Head of caudate nucleus (tissue), 42 donors: ENCODE measurements at regions of chr17 and their contacts with region 1.

Region 1: DNA sequence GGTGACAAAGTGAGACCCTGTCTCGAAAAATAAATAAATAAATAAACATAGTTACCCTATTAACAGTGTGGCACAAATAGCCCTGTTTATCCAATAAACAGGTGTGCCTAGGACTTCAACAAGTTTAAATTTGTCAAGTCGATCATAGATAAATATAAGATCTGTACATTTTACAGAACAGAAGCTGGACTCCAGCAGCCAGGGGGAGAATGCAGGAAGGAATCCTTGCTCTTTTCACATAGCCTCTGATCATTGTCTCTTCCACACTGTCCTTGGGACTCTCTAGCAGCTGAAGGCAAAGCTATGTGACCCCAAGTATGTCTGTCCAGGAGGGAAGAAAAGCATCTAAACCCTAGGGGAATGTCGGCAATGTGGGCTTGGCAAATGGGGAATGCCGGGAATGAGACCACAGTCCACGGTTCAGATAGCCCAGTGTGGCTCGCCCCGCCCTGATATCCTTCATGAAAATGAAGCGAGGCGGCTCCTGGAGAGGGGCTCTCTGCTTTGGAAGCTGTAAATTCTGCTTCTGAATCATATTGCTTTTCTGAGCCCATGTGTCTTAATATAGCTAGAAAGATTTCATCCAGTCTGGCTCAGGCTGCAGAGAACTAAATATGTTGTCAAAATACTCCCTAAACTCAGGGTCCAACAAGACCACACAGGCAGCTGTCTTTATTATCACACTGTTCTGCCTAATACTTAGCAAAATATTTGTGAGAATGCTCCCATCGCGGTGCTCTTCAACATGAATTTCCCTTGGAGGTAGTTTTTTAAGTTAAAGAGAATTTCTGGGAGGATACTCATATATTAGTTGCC is 24.9 kb upstream of the GRB2 start:
- DNase-seq: no peak

Region 2: DNA sequence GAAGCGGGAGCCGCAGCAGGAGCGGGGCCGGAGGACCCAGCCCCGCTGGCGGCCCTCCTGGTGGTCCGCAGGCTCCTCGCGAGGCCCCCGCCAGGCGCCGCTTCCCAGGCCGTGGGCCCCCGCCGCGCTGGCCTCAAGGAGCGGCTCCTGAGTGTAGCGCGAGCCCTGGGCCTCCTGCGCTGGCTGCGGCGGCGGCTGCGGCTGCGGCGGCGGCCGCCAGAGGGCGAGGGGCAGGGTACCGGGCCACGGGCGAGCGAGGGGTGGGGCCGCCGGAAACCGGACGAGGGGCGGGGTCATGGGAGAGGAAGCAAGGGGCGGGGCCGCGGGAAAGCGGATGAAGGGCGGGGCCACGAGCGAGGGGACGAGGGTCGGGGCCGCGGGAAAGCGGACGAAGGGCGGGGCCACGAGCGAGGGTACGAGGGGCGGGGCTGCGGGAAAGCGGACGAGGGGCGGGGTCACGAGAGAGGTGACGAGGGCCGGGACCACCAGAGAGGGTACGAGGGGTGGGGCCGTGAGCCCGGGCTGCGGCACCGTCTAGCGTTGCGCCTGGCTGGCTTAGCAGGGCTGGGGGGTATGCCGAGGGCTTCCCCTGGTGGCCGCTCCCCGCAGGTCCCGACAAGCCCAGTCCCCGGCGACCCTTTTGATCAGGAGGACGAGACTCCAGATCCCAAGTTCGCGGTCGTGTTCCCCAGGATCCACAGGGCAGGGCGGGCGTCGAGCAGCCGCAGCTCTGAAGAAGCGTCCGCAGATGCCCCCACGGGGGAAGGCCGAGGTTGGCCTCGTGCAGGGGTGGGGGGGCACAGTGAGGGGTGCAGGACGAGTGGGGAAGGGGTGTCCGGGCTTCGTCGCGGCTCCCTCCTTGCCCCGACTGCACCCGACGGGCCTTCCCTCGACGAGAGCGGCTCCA is 158.9 kb after region 1 on chr17:
- intact Hi-C with region 1: loop called (anchors 10 kb)
- DNase-seq: peak; percentile 82 to 99 (median 95)